ENCODE measurements at regions of chr2 and their contacts with region 1.

Region 1: DNA sequence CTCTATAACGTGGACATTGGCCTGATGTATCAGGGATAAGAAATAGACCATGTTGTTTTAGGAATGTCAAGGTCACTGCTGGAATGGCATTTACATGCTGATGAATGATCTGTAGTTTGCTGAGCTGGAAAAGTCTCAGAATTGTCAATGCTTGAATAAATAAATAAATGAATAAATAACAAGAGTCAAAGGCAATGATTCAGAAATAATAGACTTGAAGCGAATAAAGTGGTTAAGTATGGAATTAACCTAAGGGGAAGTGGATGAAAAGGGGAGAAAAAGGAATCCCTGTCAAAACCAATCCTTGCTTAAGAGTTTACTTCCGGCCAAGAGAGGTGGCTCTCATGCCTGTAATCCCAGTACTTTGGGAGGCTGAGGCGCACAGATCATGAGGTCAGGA is 1620.0 kb downstream of the SUCLG1 start:
- DNase-seq: no peak
- ATAC-seq: no peak
- H3K4me3 ChIP-seq: no peak overlapping the region
- H3K4me3 Mint-ChIP-seq: no peak overlapping the region
- H3K27ac ChIP-seq: no peak overlapping the region
- H3K27ac Mint-ChIP-seq: no peak overlapping the region
- H3K4me1 ChIP-seq: no peaks in the 10 kb centered on the region
- H3K4me1 Mint-ChIP-seq: no peaks in the 10 kb centered on the region
- H3K27me3 ChIP-seq: no peaks in the 10 kb centered on the region
- H3K27me3 Mint-ChIP-seq: no peaks in the 10 kb centered on the region
- CTCF ChIP-seq: no peak

Region 2: DNA sequence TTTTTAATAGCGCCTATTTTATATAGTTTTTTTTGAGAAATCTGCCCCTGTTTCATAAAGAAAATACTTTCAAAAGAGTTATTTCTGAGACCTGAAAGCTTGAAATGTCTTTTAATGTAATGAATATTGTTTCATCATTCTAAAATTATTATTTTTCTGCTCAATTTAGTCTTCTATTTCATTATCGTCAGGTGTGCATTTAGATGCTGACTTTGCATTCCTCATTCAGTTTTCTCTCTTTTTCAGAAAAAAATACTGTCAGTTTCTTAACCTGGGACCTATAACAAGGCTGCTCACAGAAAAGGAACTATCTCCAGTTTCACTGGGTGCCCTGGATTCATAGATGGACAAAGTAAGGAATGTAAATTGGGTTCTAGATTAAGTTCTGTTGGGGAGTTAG is 11.6 kb before region 1 on chr2:
- CTCF ChIA-PET with region 1: no interaction called
- POLR2A ChIA-PET with region 1: no interaction called
- intact Hi-C with region 1: loop called in 1 of 2 experiments (anchors 1 kb)
- DNase-seq: no peak
- ATAC-seq: no peak
- H3K4me3 ChIP-seq: no peak overlapping the region
- H3K4me3 Mint-ChIP-seq: no peak overlapping the region
- H3K27ac ChIP-seq: no peak overlapping the region
- H3K27ac Mint-ChIP-seq: no peak overlapping the region
- H3K4me1 ChIP-seq: no peaks in the 10 kb centered on the region
- H3K4me1 Mint-ChIP-seq: no peaks in the 10 kb centered on the region
- H3K27me3 ChIP-seq: no peaks in the 10 kb centered on the region
- H3K27me3 Mint-ChIP-seq: no peaks in the 10 kb centered on the region
- CTCF ChIP-seq: no peak

Measured in CD8-positive, alpha-beta T cell (primary cell).